Dorsolateral prefrontal cortex (tissue), 120 donors: ENCODE measurements at regions of chr20 and their contacts with region 1.

Region 1: DNA sequence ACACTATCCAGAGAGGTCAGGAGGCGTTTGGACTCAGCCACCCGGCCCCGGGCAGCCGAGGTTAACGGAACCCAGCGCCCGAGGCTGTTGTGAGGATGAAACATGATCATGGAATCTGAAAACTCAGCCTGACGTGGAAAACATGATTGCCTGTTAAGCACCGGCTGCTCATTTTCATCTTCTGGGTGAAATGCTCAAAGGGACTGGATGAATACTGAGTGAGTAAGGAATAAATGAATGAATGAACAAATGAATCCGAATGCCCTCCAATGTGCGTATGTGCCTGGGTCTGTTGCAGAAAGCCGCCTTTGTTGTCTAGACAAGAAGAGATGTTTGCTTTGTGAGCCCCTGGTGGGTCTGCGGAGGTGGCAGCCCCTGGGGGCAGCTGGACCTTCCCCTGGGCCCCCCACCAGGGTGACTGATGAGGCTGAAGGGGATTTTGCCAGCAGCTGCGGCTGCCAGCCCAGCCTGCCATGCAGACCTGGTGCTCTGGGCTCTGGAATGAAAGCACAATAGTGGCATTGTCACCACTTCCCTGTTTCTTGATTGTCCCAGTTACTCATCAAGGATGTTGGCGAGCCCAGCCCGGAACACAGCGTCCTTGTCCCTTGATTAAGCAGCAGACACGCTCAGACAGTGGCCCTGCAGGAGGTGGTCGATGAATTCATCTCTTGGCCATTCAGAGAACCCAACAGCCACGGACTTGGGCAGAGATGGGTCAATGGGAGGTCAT is 211.1 kb downstream of the ANKRD60 start:
- DNase-seq: peak in 9 of 10 donors; percentile 68 to 94 (median 87)
- H3K4me3 ChIP-seq: peak overlapping the region in 21 of 59 donors; percentile 2 to 51 (median 25)
- H3K27ac ChIP-seq: peak overlapping the region in 44 of 59 donors; percentile 6 to 80 (median 56)
- H3K27me3 ChIP-seq: no peaks in the 10 kb centered on the region
- CTCF ChIP-seq: peak in 6 of 56 donors; percentile 13 to 37 (median 30)

Region 2: DNA sequence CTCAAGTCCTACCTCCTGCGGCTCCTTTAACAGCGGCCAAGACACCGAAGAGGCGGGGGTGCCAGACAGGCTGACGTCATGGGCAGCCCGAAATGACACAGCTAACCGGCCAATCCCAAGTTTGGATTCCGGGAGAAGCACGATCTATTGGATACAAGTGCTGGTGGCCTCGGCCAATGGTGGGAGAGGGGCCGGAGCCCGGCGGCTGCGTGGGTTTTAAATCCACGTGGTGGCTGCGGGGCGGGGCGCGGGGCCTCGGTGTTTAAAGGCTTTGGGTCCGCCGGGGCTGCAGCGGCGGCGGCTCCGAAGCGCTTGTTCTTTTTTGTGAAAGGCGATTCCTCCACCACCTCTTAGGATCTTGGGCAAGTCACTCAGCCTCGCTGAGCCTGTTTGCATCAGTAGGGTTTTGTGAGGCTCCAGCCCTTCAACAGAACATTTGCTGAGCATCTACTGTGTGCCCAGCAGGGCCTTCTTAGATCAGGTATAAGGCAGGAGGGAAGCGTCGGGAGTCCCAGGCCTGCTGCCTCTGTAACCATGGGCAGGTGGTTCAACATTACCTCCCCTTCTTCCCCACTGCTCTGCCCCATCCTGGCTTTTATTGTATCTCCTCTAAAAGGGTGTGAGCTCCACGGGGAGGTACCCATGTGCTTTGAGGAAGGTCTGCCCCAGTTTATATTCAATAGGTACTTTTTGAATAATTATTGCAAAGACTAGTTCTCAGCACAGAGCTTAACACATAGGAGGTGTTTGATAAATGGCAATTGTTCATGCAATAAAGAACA is 298.7 kb before region 1 on chr20:
- intact Hi-C with region 1: loop called in 1 of 2 experiments (anchors 5 kb)
- DNase-seq: peak; percentile 66 to 99 (median 98)
- H3K4me3 ChIP-seq: peak overlapping the region in 58 of 59 donors; percentile 11 to 71 (median 48)
- H3K27ac ChIP-seq: peak overlapping the region in 8 of 59 donors; percentile 9 to 64 (median 39)
- H3K27me3 ChIP-seq: no peaks in the 10 kb centered on the region
- CTCF ChIP-seq: peak in 7 of 56 donors; percentile 13 to 50 (median 29)